ENCODE measurements at regions of chr1 and their contacts with region 1.

Region 1: GRCh38 chr1:215475796-215476560 is 91.1 kb upstream of the KCTD3 start:
- DNase-seq: peak; percentile 81
- H3K4me3 Mint-ChIP-seq: peak overlapping the region; percentile 10
- H3K27ac Mint-ChIP-seq: peak overlapping the region; percentile 88
- H3K4me1 Mint-ChIP-seq: peaks cover 39% of the 10 kb centered on the region
- H3K27me3 Mint-ChIP-seq: no peaks in the 10 kb centered on the region
- CTCF ChIP-seq: no peak

Region 2: DNA sequence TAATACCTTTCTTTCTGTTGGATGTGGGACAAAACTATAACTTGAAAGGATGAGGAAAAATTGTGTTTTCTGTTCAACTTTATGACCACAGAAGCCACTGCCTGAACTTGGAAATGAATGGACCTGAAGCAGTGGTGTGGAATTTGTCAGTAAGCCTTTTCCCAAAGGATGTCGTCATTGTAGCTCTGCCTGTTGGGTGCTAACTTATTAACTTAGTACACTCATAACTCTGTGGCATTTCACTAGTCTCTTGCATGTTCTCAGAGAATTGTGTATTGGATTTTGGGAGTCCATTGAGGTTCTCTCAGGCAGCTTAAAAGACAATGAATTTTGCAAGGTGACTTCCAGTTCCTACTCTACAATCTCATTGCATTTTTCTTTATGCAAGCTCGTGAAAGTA is 343.8 kb before region 1 on chr1:
- CTCF ChIA-PET with region 1: interaction called, 4 read pairs
- POLR2A ChIA-PET with region 1: interaction called, 13 read pairs
- intact Hi-C with region 1: no loop called
- DNase-seq: peak; percentile 44
- H3K4me3 Mint-ChIP-seq: no peak overlapping the region
- H3K27ac Mint-ChIP-seq: no peak overlapping the region
- H3K4me1 Mint-ChIP-seq: peaks cover 21% of the 10 kb centered on the region
- H3K27me3 Mint-ChIP-seq: no peaks in the 10 kb centered on the region
- CTCF ChIP-seq: no peak

Region 3: DNA sequence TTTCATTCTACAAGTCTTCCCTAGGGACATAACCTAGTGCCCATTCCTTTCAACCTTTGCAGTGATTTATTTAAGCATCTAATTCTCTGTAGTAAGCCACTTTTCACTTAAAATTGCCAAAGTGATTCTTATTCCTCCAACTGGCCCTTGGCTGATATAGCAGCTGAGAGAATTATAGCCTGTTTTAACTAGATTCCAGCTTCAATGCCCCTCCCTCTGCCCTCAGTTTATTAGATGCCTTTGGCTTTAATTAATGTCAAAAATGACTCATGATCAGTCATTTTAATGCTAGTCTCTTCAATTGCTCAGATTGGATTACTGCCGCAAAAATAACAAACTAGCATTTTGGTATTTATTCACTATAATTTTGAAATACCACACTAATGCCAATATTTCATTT is 54.2 kb before region 1 on chr1:
- CTCF ChIA-PET with region 1: no interaction called
- POLR2A ChIA-PET with region 1: interaction called, 11 read pairs
- intact Hi-C with region 1: no loop called
- DNase-seq: peak; percentile 33
- H3K4me3 Mint-ChIP-seq: no peak overlapping the region
- H3K27ac Mint-ChIP-seq: no peak overlapping the region
- H3K4me1 Mint-ChIP-seq: peaks cover 22% of the 10 kb centered on the region
- H3K27me3 Mint-ChIP-seq: no peaks in the 10 kb centered on the region
- CTCF ChIP-seq: no peak

Region 4: DNA sequence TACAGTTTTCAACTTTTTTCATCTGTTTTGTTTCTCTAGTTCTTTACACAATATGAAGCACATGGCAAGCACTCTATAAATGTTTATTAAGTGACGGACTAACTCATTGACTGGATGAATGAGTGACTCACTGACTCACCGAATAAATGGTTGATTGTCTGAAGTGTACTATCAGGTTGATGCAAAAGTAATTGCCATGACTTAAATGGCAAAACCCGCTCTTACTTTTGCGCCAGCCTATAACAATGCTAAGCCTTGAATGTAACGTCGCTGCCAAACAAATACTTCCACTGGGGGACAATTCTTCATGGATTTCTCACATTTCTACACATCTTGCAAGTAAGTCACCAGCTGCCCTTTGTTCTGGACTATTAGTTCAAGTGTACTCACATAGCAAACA is 17.9 kb before region 1 on chr1:
- CTCF ChIA-PET with region 1: interaction called, 3 read pairs
- POLR2A ChIA-PET with region 1: interaction called, 13 read pairs
- intact Hi-C with region 1: no loop called
- DNase-seq: no peak
- H3K4me3 Mint-ChIP-seq: no peak overlapping the region
- H3K27ac Mint-ChIP-seq: no peak overlapping the region
- H3K4me1 Mint-ChIP-seq: peaks cover 6% of the 10 kb centered on the region
- H3K27me3 Mint-ChIP-seq: no peaks in the 10 kb centered on the region
- CTCF ChIP-seq: no peak

Region 5: GRCh38 chr1:215489916-215490566 is 14.1 kb after region 1 on chr1:
- CTCF ChIA-PET with region 1: interaction called, 11 read pairs
- POLR2A ChIA-PET with region 1: interaction called, 28 read pairs
- intact Hi-C with region 1: no loop called
- DNase-seq: no peak
- H3K4me3 Mint-ChIP-seq: no peak overlapping the region
- H3K27ac Mint-ChIP-seq: peak overlapping the region; percentile 33
- H3K4me1 Mint-ChIP-seq: peaks cover 15% of the 10 kb centered on the region
- H3K27me3 Mint-ChIP-seq: no peaks in the 10 kb centered on the region
- CTCF ChIP-seq: no peak

Region 6: GRCh38 chr1:215606564-215607168 is 130.7 kb after region 1 on chr1:
- CTCF ChIA-PET with region 1: no interaction called
- POLR2A ChIA-PET with region 1: no interaction called
- intact Hi-C with region 1: no loop called
- DNase-seq: peak; percentile 50
- H3K4me3 Mint-ChIP-seq: no peak overlapping the region
- H3K27ac Mint-ChIP-seq: peak overlapping the region; percentile 32
- H3K4me1 Mint-ChIP-seq: peaks cover 21% of the 10 kb centered on the region
- H3K27me3 Mint-ChIP-seq: no peaks in the 10 kb centered on the region
- CTCF ChIP-seq: peak; percentile 68

Region 7: DNA sequence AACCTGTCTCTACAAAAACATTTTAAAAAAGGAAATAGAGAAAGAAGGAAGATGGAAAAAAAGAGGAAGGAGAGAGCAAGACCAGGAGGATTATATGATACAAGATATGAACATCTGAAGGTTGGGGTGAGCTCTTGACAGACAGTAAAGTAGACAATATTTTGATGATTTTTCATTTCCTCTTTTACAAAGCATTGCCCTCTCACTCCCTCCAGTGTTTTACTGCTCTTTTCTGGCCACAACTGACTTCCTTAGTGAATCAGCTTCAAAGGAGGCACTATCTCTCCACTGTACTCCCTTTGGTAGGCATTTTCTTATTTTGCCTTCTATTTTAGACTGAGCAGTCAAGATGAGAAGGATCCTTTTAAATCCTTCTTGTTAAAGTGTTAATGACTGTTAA is 387.8 kb after region 1 on chr1:
- CTCF ChIA-PET with region 1: no interaction called
- POLR2A ChIA-PET with region 1: no interaction called
- intact Hi-C with region 1: no loop called
- DNase-seq: no peak
- H3K4me3 Mint-ChIP-seq: no peak overlapping the region
- H3K27ac Mint-ChIP-seq: no peak overlapping the region
- H3K4me1 Mint-ChIP-seq: no peaks in the 10 kb centered on the region
- H3K27me3 Mint-ChIP-seq: peaks cover 60% of the 10 kb centered on the region
- CTCF ChIP-seq: no peak

Region 8: DNA sequence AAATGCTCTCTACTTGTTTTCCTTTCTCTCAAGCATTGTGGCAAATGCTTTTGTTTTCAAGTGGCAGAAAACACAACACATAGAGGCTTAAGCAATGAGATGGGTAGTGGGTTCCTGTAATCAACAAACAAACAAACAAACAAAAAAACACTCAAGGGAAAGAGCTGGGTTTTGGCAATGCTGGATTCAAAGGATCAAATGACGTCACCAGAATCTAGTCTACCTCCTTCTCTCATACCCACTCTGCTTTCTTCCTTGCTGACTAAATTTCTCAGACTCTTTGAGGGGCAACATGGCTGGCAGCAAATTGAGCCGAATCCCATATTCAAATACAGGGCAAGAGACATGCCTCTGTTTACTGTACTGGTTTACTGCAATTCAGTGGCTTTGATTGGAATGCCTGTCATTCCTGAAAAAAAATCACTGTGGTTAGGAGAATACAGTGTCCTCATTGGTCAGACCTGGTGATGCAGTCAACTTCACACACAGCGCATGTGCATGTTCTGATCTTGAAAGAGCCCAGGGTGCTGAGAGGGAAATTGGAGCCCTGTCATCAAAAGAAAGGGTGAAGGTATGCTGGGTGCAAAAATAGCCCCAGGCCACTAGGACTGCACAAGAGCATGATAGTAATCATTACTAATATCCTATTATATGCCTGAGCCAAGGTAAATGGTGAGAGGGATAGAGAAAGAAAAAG is 447.3 kb after region 1 on chr1:
- CTCF ChIA-PET with region 1: no interaction called
- POLR2A ChIA-PET with region 1: no interaction called
- intact Hi-C with region 1: no loop called
- DNase-seq: no peak
- H3K4me3 Mint-ChIP-seq: no peak overlapping the region
- H3K27ac Mint-ChIP-seq: no peak overlapping the region
- H3K4me1 Mint-ChIP-seq: no peaks in the 10 kb centered on the region
- H3K27me3 Mint-ChIP-seq: peaks cover 100% of the 10 kb centered on the region
- CTCF ChIP-seq: no peak

Measured in MCF 10A (cell line).